Activated CD4-positive, alpha-beta memory T cell treated with anti-CD3 and anti-CD28 coated beads for 36 hours (primary cell): ENCODE measurements at regions of chr22 and their contacts with region 1.

Region 1: DNA sequence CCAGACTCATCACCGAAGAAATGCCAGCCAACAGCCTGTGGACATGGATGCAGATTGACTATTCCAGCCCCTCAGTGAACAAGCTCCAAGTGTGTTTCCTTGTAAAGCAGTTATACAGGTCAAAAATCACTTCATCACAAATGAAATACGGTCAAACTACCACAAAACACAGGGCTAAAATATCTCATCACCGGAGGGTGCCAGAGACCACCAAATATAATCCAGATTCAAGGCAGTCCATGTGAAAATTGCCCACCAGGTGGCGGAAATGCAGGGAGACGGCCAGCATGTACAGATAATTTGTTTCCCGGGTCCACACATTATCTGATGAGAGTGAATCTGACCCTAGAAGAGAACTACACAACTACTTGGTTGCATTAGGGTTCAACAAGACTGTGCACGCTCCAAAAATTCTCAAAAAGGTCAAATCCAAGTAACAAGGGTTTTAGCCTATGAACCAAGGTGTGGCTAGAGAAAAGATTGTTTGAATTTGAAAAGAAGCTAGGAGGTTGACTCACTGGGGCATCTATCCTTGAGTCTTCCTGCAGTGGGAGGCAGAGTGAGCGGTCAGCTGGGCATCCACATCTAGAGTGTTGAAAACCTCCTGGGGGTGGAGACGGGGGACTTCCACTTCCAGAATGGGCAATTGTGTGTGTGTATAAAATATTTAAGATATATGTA is 71.7 kb downstream of the IGLL5 start:
- DNase-seq: peak; percentile 81
- H3K4me3 Mint-ChIP-seq: no peak overlapping the region
- H3K27ac Mint-ChIP-seq: no peak overlapping the region
- H3K4me1 Mint-ChIP-seq: peaks cover 3% of the 10 kb centered on the region
- H3K27me3 Mint-ChIP-seq: peaks cover 21% of the 10 kb centered on the region

Region 2: DNA sequence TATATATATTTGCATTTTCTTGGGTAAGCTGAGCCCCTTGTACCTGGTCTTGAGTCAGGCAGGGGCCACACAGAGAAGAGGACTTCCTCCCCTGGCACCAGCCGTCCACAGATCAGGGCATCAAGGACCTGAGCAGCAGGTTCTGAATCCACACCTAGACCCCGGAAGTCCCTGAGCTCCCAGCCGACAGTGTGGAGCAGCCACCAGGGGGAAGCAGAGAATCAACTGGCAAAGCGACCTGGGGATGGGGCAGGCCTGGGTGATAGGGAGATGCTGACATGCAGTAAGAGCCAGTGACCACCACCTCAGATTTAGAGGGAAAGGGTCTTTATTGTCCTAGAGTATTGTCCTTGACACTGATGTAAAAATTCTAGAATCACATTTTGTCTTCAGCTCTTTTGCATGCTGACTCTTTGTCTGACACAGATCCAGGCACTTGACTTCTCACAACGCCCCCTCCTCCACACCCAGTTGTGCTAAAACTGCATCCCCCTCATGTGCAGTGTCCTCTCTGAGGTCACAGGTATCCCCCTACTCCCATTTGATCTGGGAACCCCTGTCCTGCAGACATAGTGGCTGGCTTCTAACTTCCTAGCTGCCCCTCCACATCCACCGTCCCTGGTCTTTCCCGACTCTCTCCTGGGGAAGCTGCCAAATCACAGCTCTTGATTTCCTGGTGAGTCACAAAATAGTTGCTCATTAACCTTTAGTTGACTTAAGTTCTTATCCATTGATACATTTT is 205.6 kb before region 1 on chr22:
- CTCF ChIA-PET with region 1: interaction called, 45 read pairs
- POLR2A ChIA-PET with region 1: no interaction called
- intact Hi-C with region 1: no loop called
- DNase-seq: peak; percentile 88
- H3K4me3 Mint-ChIP-seq: no peak overlapping the region
- H3K27ac Mint-ChIP-seq: peak overlapping the region; percentile 40
- H3K4me1 Mint-ChIP-seq: peaks cover 42% of the 10 kb centered on the region
- H3K27me3 Mint-ChIP-seq: no peaks in the 10 kb centered on the region

Region 3: GRCh38 chr22:22810018-22810427 is 149.3 kb before region 1 on chr22:
- CTCF ChIA-PET with region 1: interaction called, 85 read pairs
- POLR2A ChIA-PET with region 1: interaction called, 3 read pairs
- intact Hi-C with region 1: loop called (anchors 5 kb)
- DNase-seq: peak; percentile 80
- H3K4me3 Mint-ChIP-seq: no peak overlapping the region
- H3K27ac Mint-ChIP-seq: no peak overlapping the region
- H3K4me1 Mint-ChIP-seq: peaks cover 24% of the 10 kb centered on the region
- H3K27me3 Mint-ChIP-seq: no peaks in the 10 kb centered on the region

Region 4: GRCh38 chr22:22884010-22884887 is 75.0 kb before region 1 on chr22:
- CTCF ChIA-PET with region 1: interaction called, 45 read pairs
- POLR2A ChIA-PET with region 1: no interaction called
- intact Hi-C with region 1: no loop called
- DNase-seq: peak; percentile 73
- H3K4me3 Mint-ChIP-seq: no peak overlapping the region
- H3K27ac Mint-ChIP-seq: no peak overlapping the region
- H3K4me1 Mint-ChIP-seq: peaks cover 2% of the 10 kb centered on the region
- H3K27me3 Mint-ChIP-seq: peaks cover 14% of the 10 kb centered on the region

Region 5: DNA sequence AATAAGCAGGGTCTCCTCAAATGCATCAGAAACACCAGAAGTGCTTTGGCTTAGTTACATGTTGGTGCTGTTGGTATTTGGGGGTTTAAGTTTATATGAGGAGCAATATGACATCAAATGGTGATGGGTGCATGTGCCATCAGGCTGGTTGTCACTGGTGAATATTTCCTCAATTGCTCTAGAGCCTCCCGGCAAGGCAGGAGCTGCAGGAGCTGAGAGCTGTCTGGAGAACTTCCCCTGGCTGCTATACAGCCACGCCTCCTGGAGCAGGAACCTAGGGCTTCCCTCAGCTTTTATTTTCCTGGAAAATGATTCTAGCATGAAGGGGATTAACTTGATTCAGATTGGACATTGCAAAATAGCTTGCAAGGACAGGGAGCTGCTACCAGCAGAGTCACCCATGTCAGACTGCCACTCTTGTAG is 55.9 kb before region 1 on chr22:
- CTCF ChIA-PET with region 1: no interaction called
- POLR2A ChIA-PET with region 1: no interaction called
- intact Hi-C with region 1: no loop called
- DNase-seq: no peak
- H3K4me3 Mint-ChIP-seq: no peak overlapping the region
- H3K27ac Mint-ChIP-seq: no peak overlapping the region
- H3K4me1 Mint-ChIP-seq: no peaks in the 10 kb centered on the region
- H3K27me3 Mint-ChIP-seq: peaks cover 1% of the 10 kb centered on the region

Region 6: GRCh38 chr22:22988150-22988549 is 28.9 kb after region 1 on chr22:
- CTCF ChIA-PET with region 1: no interaction called
- POLR2A ChIA-PET with region 1: no interaction called
- intact Hi-C with region 1: no loop called
- DNase-seq: no peak
- H3K4me3 Mint-ChIP-seq: no peak overlapping the region
- H3K27ac Mint-ChIP-seq: no peak overlapping the region
- H3K4me1 Mint-ChIP-seq: peaks cover 4% of the 10 kb centered on the region
- H3K27me3 Mint-ChIP-seq: peaks cover 26% of the 10 kb centered on the region

Region 7: DNA sequence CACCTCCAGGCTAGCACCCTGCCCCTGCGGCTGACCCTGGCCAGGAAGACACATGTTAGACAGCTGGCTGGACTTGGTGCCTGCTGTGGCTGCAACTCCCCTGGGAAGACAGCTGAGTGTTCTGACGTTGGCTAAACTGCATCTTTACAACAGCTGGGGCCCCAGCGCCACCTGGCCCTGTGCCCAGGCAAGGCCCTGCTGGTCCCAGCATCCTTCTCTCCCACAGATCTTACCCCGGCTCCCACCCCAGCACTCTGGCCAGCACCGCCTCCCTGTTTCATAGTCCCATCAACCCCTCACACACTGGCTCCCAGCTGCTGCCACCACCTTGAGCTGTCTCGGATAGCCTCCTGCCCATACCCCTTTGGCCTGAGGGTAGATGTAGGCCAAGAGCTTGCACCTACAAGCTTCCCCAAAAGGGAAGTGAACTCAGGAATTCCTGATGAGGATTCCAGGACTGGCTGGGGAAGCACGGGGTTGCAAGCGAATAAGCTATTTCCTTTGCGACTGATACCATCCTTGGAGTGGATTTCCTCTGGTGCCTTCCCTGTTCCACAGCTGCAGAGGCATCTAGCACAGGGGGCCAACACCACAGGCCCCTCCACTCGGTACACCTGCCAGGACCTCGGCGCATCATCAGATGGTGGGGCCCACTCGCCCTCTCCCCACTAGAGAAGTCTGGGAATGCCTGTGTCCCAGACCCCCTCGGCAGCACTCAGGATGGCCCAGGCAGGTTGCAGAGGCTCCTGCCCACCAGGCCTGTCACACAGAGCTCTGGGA is 154.0 kb after region 1 on chr22:
- CTCF ChIA-PET with region 1: interaction called, 105 read pairs
- POLR2A ChIA-PET with region 1: no interaction called
- intact Hi-C with region 1: no loop called
- DNase-seq: no peak
- H3K4me3 Mint-ChIP-seq: no peak overlapping the region
- H3K27ac Mint-ChIP-seq: no peak overlapping the region
- H3K4me1 Mint-ChIP-seq: no peaks in the 10 kb centered on the region
- H3K27me3 Mint-ChIP-seq: no peaks in the 10 kb centered on the region

Region 8: GRCh38 chr22:23137905-23138561 is 178.7 kb after region 1 on chr22:
- CTCF ChIA-PET with region 1: interaction called, 53 read pairs
- POLR2A ChIA-PET with region 1: no interaction called
- intact Hi-C with region 1: no loop called
- DNase-seq: peak; percentile 61
- H3K4me3 Mint-ChIP-seq: no peak overlapping the region
- H3K27ac Mint-ChIP-seq: peak overlapping the region; percentile 92
- H3K4me1 Mint-ChIP-seq: peaks cover 48% of the 10 kb centered on the region
- H3K27me3 Mint-ChIP-seq: no peaks in the 10 kb centered on the region